Activated CD8-positive, alpha-beta T cell treated with anti-CD3 and anti-CD28 coated beads for 36 hours (primary cell): ENCODE measurements at regions of chr11 and their contacts with region 1.

Region 1: DNA sequence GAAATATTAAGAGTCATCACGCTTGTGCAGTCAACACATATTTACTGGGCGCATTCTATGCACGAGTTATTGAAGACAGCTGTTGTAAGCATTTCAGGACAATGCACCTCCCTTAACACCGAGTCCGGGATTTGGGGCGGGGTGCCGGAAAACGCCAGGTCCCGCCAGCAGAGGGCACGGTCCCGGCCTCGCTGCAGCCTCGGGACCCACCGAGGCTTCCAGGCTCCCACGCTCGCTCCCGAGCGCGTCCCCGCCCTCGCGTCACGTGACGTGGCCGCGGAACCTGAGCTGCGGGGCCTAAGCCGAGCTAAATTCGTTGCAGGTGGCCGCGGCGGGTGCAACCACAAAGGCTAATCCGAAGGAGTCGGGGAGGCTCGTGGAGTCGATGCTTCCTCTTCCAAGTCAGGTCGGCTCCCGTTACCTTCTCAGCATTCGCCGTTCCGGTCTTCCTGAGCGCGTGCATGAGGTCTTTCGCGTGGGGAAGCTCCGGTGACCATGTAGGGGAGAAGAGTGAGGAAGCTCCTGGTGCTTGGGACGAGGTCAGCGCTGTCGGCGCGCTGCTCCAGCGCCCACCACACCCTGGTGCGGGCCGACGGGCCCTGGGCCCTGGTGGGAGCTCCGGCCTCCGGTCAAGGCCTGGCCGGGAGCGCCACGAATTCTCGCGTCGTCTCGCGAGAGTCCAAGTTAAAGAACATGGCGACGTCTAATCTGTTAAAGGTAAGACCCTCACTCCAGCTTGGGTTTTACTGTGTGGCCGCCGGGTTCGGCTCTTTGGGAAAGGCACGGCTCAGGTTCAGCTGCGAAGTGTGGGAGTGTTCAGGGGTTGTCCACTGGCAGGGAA is at the start of gene CUL5:
- DNase-seq: peak; percentile 90
- ATAC-seq: peak; percentile 88
- H3K4me3 Mint-ChIP-seq: peak within 1 kb of the TSS; percentile 98
- H3K27ac Mint-ChIP-seq: peak within 1 kb of the TSS; percentile 94
- H3K4me1 Mint-ChIP-seq: peaks cover 16% of the 10 kb centered on the region
- H3K27me3 Mint-ChIP-seq: no peaks in the 10 kb centered on the region
- CTCF ChIP-seq: peak; percentile 87
- total RNA-seq, gene CUL5: 32.2 to 34.6 TPM

Region 2: GRCh38 chr11:107991868-107992414 is 16.9 kb before region 1 on chr11:
- CTCF ChIA-PET with region 1: interaction called, 26 read pairs
- POLR2A ChIA-PET with region 1: interaction called, 3 read pairs
- intact Hi-C with region 1: no loop called
- DNase-seq: no peak
- ATAC-seq: no peak
- H3K4me3 Mint-ChIP-seq: no peak overlapping the region
- H3K27ac Mint-ChIP-seq: no peak overlapping the region
- H3K4me1 Mint-ChIP-seq: no peaks in the 10 kb centered on the region
- H3K27me3 Mint-ChIP-seq: peaks cover 3% of the 10 kb centered on the region
- CTCF ChIP-seq: no peak

Region 3: GRCh38 chr11:108019870-108020540 is 11.1 kb after region 1 on chr11:
- CTCF ChIA-PET with region 1: interaction called, 15 read pairs
- POLR2A ChIA-PET with region 1: interaction called, 3 read pairs
- intact Hi-C with region 1: no loop called
- DNase-seq: no peak
- ATAC-seq: no peak
- H3K4me3 Mint-ChIP-seq: no peak overlapping the region
- H3K27ac Mint-ChIP-seq: no peak overlapping the region
- H3K4me1 Mint-ChIP-seq: peaks cover 59% of the 10 kb centered on the region
- H3K27me3 Mint-ChIP-seq: no peaks in the 10 kb centered on the region
- CTCF ChIP-seq: no peak

Region 4: DNA sequence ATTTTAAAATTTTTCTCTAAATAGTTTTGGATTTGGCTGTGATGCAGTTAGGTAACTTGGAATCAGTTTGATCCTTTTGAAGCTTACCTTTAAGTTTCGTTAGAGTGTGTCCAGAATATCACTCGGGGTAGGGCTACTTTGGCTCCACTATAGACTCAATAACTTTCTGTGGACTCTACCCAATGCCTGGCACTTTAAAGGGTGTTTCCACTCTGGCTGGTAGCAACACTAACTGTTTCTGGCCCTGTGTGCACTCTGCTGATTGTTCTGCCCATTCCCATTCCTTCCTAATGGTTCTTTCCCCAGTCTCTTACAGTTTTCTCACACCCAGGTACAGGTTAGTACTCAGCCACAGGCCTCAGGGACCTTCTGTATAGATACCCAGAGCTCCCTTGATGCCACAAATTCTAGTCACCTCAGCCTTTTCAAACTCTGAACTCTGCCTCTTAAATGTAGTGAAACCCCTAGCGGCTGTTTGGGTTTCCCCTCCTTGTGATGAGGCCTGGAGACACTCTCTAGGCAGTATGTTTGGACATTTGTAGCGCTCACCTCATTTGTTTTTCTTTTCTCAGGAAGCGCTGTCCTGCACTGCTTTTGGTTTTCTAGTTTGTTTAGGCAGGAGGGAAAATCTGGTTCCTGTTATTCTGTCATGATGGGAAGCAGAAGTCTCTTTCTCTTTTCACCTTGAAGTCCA is 16.7 kb after region 1 on chr11:
- CTCF ChIA-PET with region 1: interaction called, 15 read pairs
- POLR2A ChIA-PET with region 1: no interaction called
- intact Hi-C with region 1: no loop called
- DNase-seq: peak; percentile 41
- ATAC-seq: peak; percentile 87
- H3K4me3 Mint-ChIP-seq: no peak overlapping the region
- H3K27ac Mint-ChIP-seq: peak overlapping the region; percentile 71
- H3K4me1 Mint-ChIP-seq: peaks cover 51% of the 10 kb centered on the region
- H3K27me3 Mint-ChIP-seq: no peaks in the 10 kb centered on the region
- CTCF ChIP-seq: no peak

Region 5: GRCh38 chr11:108032800-108033199 is 23.9 kb after region 1 on chr11:
- CTCF ChIA-PET with region 1: interaction called, 11 read pairs
- POLR2A ChIA-PET with region 1: interaction called, 3 read pairs
- intact Hi-C with region 1: no loop called
- DNase-seq: no peak
- ATAC-seq: no peak
- H3K4me3 Mint-ChIP-seq: no peak overlapping the region
- H3K27ac Mint-ChIP-seq: peak overlapping the region; percentile 5
- H3K4me1 Mint-ChIP-seq: peaks cover 24% of the 10 kb centered on the region
- H3K27me3 Mint-ChIP-seq: no peaks in the 10 kb centered on the region
- CTCF ChIP-seq: no peak

Region 6: DNA sequence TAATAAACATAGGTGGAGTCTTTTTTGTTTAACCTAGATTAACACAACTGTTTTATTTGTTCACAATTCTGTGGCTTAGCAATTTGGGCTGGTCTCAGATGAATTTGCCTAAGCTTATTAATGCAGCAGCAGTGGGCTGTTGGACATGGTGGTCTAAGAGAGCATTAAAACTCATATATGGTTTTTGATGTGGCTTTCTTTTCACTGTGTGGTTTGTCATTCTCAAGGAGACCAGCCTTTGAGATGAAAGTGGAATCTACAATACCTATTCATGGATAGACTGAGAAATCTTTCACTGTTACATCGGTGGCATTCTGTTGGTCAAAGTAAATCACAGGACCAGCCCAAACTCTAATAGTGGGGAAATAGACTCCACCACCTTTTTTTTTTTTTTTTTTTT is 39.4 kb after region 1 on chr11:
- CTCF ChIA-PET with region 1: interaction called, 13 read pairs
- POLR2A ChIA-PET with region 1: no interaction called
- intact Hi-C with region 1: no loop called
- DNase-seq: no peak
- ATAC-seq: no peak
- H3K4me3 Mint-ChIP-seq: no peak overlapping the region
- H3K27ac Mint-ChIP-seq: no peak overlapping the region
- H3K4me1 Mint-ChIP-seq: peaks cover 8% of the 10 kb centered on the region
- H3K27me3 Mint-ChIP-seq: no peaks in the 10 kb centered on the region
- CTCF ChIP-seq: no peak

Region 7: GRCh38 chr11:108664730-108665525 is 656.1 kb after region 1 on chr11 and contains the start of gene DDX10:
- CTCF ChIA-PET with region 1: interaction called, 3 read pairs
- POLR2A ChIA-PET with region 1: no interaction called
- intact Hi-C with region 1: loop called (anchors 5 kb)
- DNase-seq: peak; percentile 99
- ATAC-seq: peak; percentile 100
- H3K4me3 Mint-ChIP-seq: peak within 1 kb of the TSS; percentile 98
- H3K27ac Mint-ChIP-seq: peak within 1 kb of the TSS; percentile 97
- H3K4me1 Mint-ChIP-seq: peaks cover 39% of the 10 kb centered on the region
- H3K27me3 Mint-ChIP-seq: peaks cover 2% of the 10 kb centered on the region
- CTCF ChIP-seq: no peak
- total RNA-seq, gene DDX10: 45.4 to 46.3 TPM